ENCODE measurements at regions of chr5 and their contacts with region 1.

Region 1: DNA sequence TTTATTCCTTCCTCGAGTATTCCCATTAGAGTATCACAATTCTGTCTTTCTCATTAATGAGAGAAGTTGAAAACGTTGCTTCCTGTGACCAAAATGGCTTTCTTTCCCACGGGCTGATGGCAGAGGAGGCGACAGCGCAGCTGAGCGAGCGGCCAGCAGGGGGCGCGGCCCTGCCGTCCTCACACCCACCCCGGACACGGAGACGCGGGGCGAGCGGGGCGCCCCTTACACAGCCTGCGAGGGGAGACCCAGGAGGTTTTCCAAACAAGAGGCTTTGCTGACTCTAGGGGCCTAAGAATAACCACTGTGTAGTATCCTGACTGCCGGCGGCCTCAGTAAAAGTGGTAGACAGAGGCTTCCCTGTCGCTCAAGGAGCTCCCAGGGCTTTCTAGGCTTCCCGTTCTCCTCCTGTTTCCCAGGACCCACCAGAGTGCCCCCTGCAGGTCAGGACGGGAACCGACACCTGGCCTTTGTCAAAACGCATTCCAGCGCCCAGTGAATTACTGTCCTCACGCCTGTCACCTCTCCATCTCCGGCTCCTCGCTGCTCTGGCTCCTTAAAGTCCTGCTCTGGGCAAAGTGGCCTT is 27.3 kb upstream of the FGF1 start:
- DNase-seq: peak; percentile 94
- H3K4me3 ChIP-seq: peak overlapping the region; percentile 52
- H3K27ac ChIP-seq: peak overlapping the region; percentile 67
- H3K4me1 ChIP-seq: peaks cover 16% of the 10 kb centered on the region
- H3K27me3 ChIP-seq: no peaks in the 10 kb centered on the region
- CTCF ChIP-seq: peak; percentile 99

Region 2: GRCh38 chr5:142655339-142656267 is 57.6 kb before region 1 on chr5:
- CTCF ChIA-PET with region 1: interaction called, 23 read pairs
- POLR2A ChIA-PET with region 1: no interaction called
- intact Hi-C with region 1: no loop called
- DNase-seq: peak; percentile 88
- H3K4me3 ChIP-seq: no peak overlapping the region
- H3K27ac ChIP-seq: no peak overlapping the region
- H3K4me1 ChIP-seq: peaks cover 14% of the 10 kb centered on the region
- H3K27me3 ChIP-seq: no peaks in the 10 kb centered on the region
- CTCF ChIP-seq: peak; percentile 99

Region 3: DNA sequence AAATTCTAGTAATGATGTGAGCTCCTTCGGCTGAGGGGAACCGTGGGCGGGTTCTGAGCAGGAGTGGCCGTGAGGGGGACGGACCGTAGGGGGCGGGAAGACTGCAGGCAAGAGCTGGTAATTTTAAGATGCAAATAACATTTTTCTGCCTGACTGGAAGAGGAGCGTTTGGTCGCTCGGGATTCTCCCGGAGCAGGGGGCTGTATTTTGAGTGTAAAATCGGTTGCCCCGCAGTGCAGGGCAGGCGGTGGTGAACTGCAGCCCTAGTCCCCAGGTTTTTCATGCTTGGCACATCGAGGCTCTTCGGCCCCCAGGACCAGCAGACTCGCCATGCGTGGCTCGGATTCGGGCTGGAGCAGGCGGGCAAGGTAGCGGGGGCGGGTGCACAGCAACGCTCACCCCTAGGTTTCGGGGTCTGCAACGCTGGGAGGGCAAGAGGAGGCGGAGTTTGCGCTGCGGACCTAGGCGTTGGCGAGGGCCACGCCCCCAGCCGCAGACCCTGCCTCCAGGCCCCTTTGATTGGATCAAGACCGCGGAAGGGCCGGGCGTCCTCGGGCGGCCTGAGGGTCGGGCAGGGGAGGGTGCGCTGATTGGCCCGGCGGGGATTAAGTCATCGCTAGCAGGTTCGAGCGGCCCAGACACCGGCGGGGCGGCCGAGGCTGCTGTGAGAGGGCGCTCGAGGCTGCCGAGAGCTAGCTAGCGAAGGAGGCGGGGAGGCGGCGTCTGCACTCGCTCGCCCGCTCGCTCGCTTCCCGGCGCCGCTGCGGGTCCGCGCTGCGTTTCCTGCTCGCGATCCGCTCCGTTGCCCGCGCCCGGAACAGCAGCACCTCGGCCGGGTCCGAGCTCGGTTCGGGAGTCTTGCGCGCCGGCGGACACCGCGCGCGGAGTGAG is 56.8 kb after region 1 on chr5 and contains the start of gene ARHGAP26:
- CTCF ChIA-PET with region 1: interaction called, 3 read pairs
- POLR2A ChIA-PET with region 1: no interaction called
- intact Hi-C with region 1: loop called (anchors 2 kb)
- DNase-seq: peak; percentile 98
- H3K4me3 ChIP-seq: peak within 1 kb of the TSS; percentile 66
- H3K27ac ChIP-seq: peak within 1 kb of the TSS; percentile 58
- H3K4me1 ChIP-seq: peaks cover 15% of the 10 kb centered on the region
- H3K27me3 ChIP-seq: no peaks in the 10 kb centered on the region
- CTCF ChIP-seq: no peak; the same call in 1 of the 2 replicates
- total RNA-seq, gene ARHGAP26: 25.5 and 25.8 TPM in 2 replicates

Region 4: GRCh38 chr5:142881076-142881783 is 168.0 kb after region 1 on chr5:
- CTCF ChIA-PET with region 1: interaction called, 62 read pairs
- POLR2A ChIA-PET with region 1: no interaction called
- intact Hi-C with region 1: loop called (anchors 1 kb)
- DNase-seq: peak; percentile 62
- H3K4me3 ChIP-seq: no peak overlapping the region
- H3K27ac ChIP-seq: no peak overlapping the region
- H3K4me1 ChIP-seq: peaks cover 29% of the 10 kb centered on the region
- H3K27me3 ChIP-seq: no peaks in the 10 kb centered on the region
- CTCF ChIP-seq: no peak

Region 5: DNA sequence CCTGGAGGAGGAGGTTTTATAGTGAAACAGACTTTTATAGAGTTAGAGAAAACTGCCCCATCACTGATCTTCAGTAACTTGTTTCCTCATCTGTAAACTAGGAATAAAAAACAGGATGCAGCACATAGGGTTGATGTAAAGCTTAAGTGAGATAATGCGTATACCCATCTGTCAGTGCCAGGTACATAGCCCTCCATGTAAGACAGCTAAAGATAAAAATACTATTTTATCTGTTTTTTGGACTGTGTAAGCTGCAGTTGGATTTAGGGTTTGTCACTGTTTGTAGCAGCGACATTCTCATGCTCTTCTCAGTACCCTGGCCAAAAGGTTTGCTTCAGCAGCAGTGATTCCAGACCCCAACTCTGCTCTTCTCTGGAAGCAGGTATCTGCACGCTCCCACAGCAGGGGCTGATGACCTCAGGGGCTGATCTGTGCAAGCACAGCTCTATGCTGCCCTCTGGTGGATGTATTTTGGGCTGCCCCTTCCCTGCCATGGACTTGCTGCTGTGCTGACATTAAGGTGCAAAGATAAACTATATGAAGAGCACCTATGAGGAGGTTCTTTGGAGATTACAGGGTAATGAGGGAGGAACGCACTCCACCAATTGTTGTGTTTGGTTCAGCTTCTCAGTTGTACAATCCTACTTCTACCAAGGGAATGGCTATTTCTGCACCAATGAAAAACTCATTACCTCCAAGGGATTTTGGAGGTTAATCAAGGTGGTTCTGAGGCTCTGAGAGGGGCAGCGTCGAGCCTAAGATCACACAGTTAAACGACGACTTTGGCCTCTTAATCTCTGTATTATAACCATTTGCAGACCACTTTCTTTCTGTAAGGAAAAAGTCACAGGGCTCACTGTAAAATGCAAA is 1111.9 kb after region 1 on chr5:
- CTCF ChIA-PET with region 1: no interaction called
- POLR2A ChIA-PET with region 1: no interaction called
- intact Hi-C with region 1: loop called (anchors 5 kb)
- DNase-seq: peak; percentile 76
- H3K4me3 ChIP-seq: no peak overlapping the region
- H3K27ac ChIP-seq: no peak overlapping the region
- H3K4me1 ChIP-seq: no peaks in the 10 kb centered on the region
- H3K27me3 ChIP-seq: no peaks in the 10 kb centered on the region
- CTCF ChIP-seq: peak; percentile 95

Measured in A673 (cell line).